ENCODE measurements at regions of chr1 and their contacts with region 1.

Region 1: DNA sequence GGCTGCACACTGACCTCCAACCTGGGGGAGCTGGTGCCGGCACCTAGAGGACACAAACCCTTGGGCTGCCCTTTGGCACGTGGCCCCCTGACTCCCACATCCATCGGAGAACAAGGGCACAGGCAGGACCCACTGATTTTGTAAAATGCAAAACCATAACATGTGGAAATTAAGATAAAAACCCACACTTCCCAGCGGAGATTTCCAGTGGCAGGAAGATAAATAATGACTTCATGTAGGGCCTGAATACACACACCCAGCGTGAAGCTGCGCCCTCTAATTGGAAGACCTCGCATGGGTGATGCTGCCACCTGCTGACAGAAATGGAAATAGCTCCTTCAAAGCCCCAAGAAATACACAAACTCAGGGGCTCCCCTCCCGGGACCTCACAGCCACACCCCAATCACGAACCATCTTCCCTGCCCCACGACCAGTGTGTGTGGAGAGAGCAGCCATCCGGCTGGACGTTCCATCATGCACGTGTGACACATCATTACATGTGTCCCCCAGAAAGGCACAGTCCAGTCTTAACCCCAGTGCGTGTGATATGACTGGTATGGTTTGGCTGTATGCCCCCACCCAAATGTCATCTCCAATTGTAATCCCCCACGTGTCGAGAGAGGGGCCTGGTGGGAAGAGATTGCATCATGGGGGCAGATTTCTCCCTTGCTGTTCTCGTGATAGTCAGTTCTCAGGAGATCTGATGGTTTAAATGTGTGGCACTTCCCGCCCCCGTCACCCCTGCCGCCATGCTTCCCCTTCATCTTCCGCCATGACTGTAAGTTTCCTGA is 5.7 kb upstream of the TPRG1L start:
- DNase-seq: peak; percentile 82 to 85
- H3K4me3 ChIP-seq: no peak overlapping the region
- H3K27ac ChIP-seq: no peak overlapping the region
- H3K4me1 ChIP-seq: peaks cover 0 to 21% (median 17%) of the 10 kb centered on the region in 4 donors
- H3K27me3 ChIP-seq: peaks cover 0 to 23% of the 10 kb centered on the region in 2 donors
- CTCF ChIP-seq: peak; percentile 83 to 85

Region 2: GRCh38 chr1:2174348-2175054 is 1444.6 kb before region 1 on chr1:
- intact Hi-C with region 1: no loop called
- DNase-seq: peak; percentile 64 to 80
- H3K4me3 ChIP-seq: peak overlapping the region; percentile 18 to 52
- H3K27ac ChIP-seq: no peak overlapping the region
- H3K4me1 ChIP-seq: peaks cover 0 to 12% (median 4%) of the 10 kb centered on the region in 4 donors
- H3K27me3 ChIP-seq: peaks cover 0 to 44% of the 10 kb centered on the region in 2 donors
- CTCF ChIP-seq: peak; percentile 86 to 92

Region 3: GRCh38 chr1:3491291-3492246 is 127.5 kb before region 1 on chr1:
- intact Hi-C with region 1: loop called (anchors 2 kb)
- DNase-seq: peak; percentile 64 to 82
- H3K4me3 ChIP-seq: no peak overlapping the region
- H3K27ac ChIP-seq: no peak overlapping the region
- H3K4me1 ChIP-seq: peaks cover 0 to 10% (median 2%) of the 10 kb centered on the region in 4 donors
- H3K27me3 ChIP-seq: no peaks in the 10 kb centered on the region
- CTCF ChIP-seq: peak; percentile 96 to 100

Region 4: DNA sequence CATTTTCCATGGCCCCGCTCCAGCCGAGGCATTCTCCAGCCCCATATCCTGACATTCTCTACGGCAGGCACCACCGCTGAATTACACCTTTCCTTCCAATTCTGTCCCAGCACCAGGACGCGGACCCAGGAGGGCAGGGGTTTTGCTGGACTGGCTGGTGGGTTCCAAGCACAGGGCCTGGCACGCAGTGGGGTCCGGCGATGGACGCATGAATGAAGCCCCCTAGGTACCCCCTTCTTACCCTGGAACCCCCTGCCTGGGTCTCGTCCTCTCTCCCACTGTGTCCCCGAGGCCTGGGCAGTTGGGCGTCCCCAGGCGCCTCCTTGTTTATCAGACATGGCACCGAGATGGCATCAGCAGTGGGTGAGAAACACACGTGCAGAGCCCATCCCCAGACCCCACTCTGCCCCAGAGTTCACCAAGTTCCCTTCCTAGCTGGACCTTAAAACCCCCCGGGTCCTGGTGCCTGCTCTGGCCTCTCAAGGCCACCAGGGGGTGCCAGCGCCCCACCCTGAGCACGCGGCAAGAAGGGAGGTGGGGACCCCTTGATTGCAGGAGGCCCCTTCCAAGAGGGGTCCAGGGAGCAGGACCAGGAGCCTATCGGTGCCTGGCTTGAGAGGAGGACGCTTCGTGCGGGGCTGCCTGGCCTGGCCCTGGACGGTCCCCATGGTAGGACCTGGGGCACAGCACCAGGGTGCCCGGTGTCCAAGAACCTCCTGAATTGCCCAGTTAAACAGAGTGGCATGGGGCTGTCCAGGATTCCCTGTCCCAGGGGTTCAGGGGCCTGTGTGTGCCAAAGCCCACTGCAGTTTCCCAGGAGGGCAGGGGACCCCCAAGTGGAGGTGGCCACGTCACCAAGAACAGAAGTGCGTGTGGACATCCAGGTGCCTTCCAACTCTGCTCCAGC is 53.9 kb before region 1 on chr1:
- intact Hi-C with region 1: loop called (anchors 5 kb)
- DNase-seq: no peak
- H3K4me3 ChIP-seq: no peak overlapping the region
- H3K27ac ChIP-seq: no peak overlapping the region
- H3K4me1 ChIP-seq: peaks cover 0 to 19% (median 10%) of the 10 kb centered on the region in 4 donors
- H3K27me3 ChIP-seq: peaks cover 0 to 20% of the 10 kb centered on the region in 2 donors
- CTCF ChIP-seq: peak; percentile 73

Region 5: GRCh38 chr1:3668585-3669300 is 49.7 kb after region 1 on chr1:
- intact Hi-C with region 1: no loop called
- DNase-seq: peak; percentile 32 to 70
- H3K4me3 ChIP-seq: no peak overlapping the region
- H3K27ac ChIP-seq: no peak overlapping the region
- H3K4me1 ChIP-seq: peaks cover 0 to 10% (median 0%) of the 10 kb centered on the region in 4 donors
- H3K27me3 ChIP-seq: peaks cover 0 to 64% of the 10 kb centered on the region in 2 donors
- CTCF ChIP-seq: no peak

Region 6: DNA sequence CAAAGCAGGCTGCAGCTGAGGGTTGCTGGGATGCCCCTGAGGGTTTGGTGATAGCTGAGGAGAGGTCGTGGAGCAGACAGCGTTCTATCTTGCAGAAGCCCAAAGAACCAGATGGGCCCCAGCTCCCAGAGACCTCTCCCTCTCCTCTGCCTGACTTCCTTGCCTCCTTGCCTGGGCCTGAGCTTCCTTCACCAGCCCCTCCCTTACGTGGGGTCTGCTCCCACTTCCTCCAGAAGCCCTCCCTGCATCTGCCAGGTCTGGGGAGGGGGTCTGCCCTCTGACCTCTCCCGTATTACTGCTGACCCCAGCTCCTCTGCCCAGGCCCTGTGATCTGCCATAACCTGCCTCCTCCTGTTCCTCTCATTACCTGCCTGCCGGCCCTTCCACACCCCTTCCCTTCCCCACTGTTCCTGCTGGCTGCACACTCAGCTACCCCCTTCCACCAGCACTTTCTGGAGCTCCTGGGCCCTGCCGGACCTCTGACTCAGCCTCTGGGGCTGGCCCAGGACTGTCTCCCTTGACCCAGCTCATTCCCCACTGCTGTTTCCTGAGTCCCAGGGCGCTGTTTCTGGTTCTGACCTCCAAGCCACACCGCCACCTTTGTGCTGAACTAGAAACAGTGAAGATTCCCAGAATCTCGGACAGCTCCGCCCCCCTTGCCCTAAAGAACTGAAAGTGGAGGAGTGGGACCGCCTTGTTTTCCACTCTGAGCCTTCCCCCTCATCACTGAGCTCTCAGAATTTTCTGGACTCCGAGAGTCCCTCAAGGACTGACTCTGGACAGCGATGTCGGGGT is 518.7 kb after region 1 on chr1:
- intact Hi-C with region 1: no loop called
- DNase-seq: no peak
- H3K4me3 ChIP-seq: no peak overlapping the region
- H3K27ac ChIP-seq: no peak overlapping the region
- H3K4me1 ChIP-seq: no peaks in the 10 kb centered on the region
- H3K27me3 ChIP-seq: peaks cover 0 to 48% of the 10 kb centered on the region in 2 donors
- CTCF ChIP-seq: no peak

Region 7: GRCh38 chr1:4640721-4641330 is 1021.8 kb after region 1 on chr1:
- intact Hi-C with region 1: no loop called
- DNase-seq: peak in 1 of 2 donors; percentile 44
- H3K4me3 ChIP-seq: no peak overlapping the region
- H3K27ac ChIP-seq: no peak overlapping the region
- H3K4me1 ChIP-seq: no peaks in the 10 kb centered on the region
- H3K27me3 ChIP-seq: peaks cover 0 to 49% of the 10 kb centered on the region in 2 donors
- CTCF ChIP-seq: no peak

Measured in tibial artery (tissue), 4 donors.